Activated T-helper 1 cell treated with anti-CD3 and anti-CD28 coated beads, Interleukin-12 subunit alpha, Interleukin-12 subunit beta, Interleukin-2, Interleukin-4 antibody, amounts not matched to agents 30 ng/mL and 10 ng/mL and 1 ng/mL, durations not matched to agents 14 hours and 24 hours and 36 hours (primary cell): ENCODE measurements at regions of chr5 and their contacts with region 1.

Region 1: DNA sequence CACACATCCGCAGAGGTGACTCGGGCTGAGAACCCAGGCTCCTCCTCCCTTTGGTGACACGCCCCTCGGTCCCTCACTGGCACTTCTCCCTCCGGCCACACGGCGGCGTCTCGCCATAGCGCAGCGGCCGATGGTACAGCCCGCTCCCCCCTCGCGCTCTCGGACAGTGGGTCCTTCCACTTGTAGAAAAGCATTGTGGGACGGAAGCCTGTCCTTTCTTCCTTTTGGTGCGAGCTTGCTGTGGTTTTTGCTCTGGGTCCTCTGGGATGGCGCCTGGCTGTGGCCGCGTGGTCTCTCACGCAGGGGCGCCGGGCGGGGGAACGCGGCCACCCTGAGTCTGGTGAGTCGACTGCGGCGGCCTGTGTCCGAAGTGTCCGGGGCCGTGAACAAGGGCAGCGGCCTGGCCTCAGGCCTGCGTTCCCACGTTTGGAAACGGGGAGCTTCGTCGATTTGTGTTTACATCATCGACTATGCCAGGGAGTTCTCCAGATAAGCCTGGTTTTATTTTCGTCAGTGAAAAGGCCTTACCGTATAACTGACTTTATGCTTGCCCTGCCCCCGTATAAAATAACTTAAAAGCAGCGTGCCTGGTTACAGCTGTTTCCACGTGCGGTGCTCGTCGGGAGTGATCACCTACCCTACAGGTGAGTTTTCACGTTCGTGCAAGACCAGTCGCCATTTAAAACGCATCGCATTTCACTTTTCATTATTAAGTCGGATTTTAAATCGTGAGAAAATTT is 258.3 kb downstream of the EPB41L4A start:
- DNase-seq: peak; percentile 89
- H3K4me3 Mint-ChIP-seq: peak overlapping the region; percentile 93
- H3K27ac Mint-ChIP-seq: peak overlapping the region; percentile 87
- H3K4me1 Mint-ChIP-seq: peaks cover 30% of the 10 kb centered on the region
- H3K27me3 Mint-ChIP-seq: peaks cover 3% of the 10 kb centered on the region

Region 2: DNA sequence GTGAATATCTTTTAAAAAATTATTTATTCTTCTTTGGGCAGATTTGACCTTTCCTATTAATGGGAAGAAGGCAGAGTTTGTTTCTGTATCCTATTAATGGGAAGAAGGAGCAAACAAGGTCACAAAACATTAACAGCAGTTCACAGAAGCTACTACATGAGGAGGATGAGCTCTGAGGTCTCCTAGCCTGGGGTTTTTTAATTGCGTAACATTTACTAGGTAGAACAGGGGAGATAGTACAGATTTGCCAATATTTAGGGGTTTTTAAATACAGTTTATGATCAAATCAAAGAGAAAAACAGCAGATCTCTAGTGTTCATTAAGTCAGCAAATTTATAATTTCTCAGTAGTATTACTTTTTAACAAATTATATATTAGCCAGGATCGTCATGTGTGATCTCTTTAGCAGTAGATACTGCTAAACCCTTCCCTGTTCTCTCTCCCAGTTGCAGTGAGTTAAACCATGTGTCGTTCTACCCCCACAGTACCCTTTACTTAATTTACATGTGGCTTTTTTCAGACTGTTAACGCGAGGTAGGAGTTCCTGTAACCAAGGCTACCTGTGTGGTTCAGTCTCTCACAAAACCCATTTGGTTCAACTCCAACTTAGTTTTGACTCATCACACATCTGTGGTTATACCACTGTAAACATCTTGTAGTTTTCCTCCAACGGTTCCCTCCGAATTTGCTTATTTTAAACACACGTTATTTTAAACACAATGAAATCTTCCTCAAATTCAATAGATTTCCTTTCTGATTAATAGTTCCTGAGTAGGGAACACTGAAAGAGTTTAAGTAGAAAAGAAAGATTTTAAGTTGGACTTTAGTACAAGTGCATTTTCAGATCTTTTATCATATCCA is 1408.7 kb before region 1 on chr5:
- intact Hi-C with region 1: loop called (anchors 2 kb)
- DNase-seq: peak; percentile 52
- H3K4me3 Mint-ChIP-seq: peak overlapping the region; percentile 64
- H3K27ac Mint-ChIP-seq: peak overlapping the region; percentile 92
- H3K4me1 Mint-ChIP-seq: peaks cover 60% of the 10 kb centered on the region
- H3K27me3 Mint-ChIP-seq: no peaks in the 10 kb centered on the region

Region 3: DNA sequence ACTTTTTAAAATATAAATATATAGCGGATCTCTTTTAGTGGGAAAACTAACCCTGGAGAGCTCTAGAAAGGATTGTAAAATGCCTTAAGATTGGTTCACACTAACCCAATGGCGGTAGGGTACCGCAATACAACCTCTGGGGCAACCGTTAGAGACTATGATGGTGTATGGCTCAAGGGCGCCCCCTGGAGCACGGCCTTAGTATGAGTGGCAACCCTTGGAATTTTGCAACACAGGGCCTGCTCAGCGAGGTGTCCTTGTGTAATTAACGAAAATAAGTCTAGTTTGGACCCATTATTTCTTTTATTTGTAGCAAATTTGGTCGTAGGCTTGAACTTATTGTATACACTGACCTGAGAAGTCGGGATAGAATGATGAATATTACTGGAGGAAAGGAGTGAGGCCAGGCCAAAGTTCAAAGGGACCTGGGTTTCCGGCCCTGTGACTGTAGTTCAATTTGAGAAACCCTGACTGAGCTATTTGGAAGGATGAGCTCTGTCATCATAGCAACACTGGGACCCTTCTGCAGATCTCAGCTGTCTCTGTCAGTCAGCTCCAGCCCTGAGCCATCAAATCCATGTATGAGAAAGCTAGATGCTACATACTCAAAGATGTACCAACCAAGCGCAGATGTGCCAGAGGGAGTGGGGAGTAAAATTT is 881.8 kb before region 1 on chr5:
- intact Hi-C with region 1: loop called (anchors 5 kb)
- DNase-seq: peak; percentile 75
- H3K4me3 Mint-ChIP-seq: no peak overlapping the region
- H3K27ac Mint-ChIP-seq: no peak overlapping the region
- H3K4me1 Mint-ChIP-seq: peaks cover 27% of the 10 kb centered on the region
- H3K27me3 Mint-ChIP-seq: no peaks in the 10 kb centered on the region

Region 4: GRCh38 chr5:111757355-111758283 is 403.2 kb before region 1 on chr5:
- intact Hi-C with region 1: loop called (anchors 1 kb)
- DNase-seq: peak; percentile 84
- H3K4me3 Mint-ChIP-seq: peak overlapping the region; percentile 87
- H3K27ac Mint-ChIP-seq: peak overlapping the region; percentile 86
- H3K4me1 Mint-ChIP-seq: peaks cover 29% of the 10 kb centered on the region
- H3K27me3 Mint-ChIP-seq: peaks cover 4% of the 10 kb centered on the region

Region 5: GRCh38 chr5:111892949-111893348 is 267.9 kb before region 1 on chr5:
- intact Hi-C with region 1: no loop called
- DNase-seq: no peak
- H3K4me3 Mint-ChIP-seq: no peak overlapping the region
- H3K27ac Mint-ChIP-seq: no peak overlapping the region
- H3K4me1 Mint-ChIP-seq: no peaks in the 10 kb centered on the region
- H3K27me3 Mint-ChIP-seq: peaks cover 2% of the 10 kb centered on the region

Region 6: DNA sequence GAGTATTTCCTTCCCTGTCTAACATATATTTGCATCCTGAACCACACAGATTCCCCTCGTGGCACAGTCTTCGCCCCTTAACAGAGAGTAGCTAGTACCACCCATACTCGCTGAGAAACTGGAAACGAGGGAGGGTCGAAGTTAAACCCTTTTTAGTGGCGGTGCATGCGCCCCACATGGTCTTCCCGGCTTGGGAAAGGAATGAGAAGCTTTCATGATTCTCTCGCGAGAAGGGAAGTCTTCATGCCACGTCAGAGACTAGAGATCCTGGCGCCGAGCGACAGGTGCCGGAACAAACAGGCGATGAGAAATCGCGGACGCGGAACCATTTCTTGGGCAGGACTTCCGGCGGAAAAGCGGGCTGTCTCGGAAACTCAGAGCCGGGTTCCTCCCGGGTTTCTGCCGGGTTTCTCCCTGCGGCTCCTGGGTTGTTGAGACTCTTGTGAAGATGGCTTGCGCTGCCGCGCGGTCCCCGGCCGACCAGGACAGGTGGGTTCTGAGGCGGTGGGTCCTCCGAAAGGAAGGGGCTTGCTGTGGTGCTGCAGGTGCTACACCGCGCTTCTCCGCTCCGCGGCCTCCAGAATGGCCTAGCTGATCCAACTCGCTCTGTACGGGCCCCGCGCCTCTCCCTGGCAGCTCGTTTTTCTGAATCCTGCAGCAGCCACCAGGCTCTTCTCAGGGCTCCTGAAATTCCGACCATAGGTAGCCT is 700.3 kb after region 1 on chr5 and contains the start of gene SRP19:
- intact Hi-C with region 1: loop called (anchors 5 kb)
- DNase-seq: peak; percentile 89
- H3K4me3 Mint-ChIP-seq: peak within 1 kb of the TSS; percentile 97
- H3K27ac Mint-ChIP-seq: peak within 1 kb of the TSS; percentile 96
- H3K4me1 Mint-ChIP-seq: peaks cover 27% of the 10 kb centered on the region
- H3K27me3 Mint-ChIP-seq: peaks cover 12% of the 10 kb centered on the region
- total RNA-seq, gene SRP19: 72.0 and 72.5 TPM in 2 replicates

Region 7: GRCh38 chr5:112976432-112977309 is 815.8 kb after region 1 on chr5 and contains the start of gene DCP2:
- intact Hi-C with region 1: loop called (anchors 5 kb)
- DNase-seq: peak; percentile 96
- H3K4me3 Mint-ChIP-seq: peak within 1 kb of the TSS; percentile 93
- H3K27ac Mint-ChIP-seq: peak within 1 kb of the TSS; percentile 93
- H3K4me1 Mint-ChIP-seq: peaks cover 32% of the 10 kb centered on the region
- H3K27me3 Mint-ChIP-seq: no peaks in the 10 kb centered on the region
- total RNA-seq, gene DCP2: 78.9 and 82.5 TPM in 2 replicates